Tibial artery (tissue), 4 donors: ENCODE measurements at regions of chr10 and their contacts with region 1.

Region 1: DNA sequence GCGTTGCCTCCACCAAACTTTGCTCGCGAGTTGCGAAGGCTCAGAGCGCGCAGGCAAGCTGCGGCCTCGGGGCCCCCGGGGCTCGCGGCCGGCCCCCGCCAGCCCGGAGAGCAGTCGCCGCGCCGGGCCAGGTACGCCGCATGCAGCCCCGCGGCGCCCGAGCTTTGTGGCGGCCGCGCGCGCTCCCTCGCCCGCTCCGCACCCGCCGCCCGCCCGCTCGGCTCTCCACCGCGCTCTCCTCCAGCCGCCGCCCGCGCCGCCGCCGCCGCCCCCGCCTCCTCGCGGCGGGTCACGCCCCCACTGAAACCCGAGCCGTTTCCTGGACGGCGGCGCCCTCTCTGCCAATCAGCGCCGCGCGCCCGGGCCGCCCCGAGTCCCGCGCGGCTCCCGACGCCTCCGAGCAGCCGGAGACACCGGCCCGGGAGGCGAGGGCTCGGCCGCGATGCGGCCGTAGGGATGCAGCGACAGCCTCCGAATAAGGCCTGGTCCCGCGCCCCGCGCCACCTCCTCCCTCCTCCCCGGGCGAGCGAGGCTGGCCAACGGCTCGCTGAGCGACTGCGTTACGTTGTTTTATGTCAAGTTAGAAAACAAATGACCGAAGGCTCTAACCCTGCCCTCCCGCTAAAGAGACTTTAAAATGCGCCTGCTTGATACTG is at the start of gene FGFR2:
- DNase-seq: peak; percentile 77 to 92
- H3K4me3 ChIP-seq: peak within 1 kb of the TSS; percentile 62 to 65
- H3K27ac ChIP-seq: peak within 1 kb of the TSS; percentile 76 to 89
- H3K4me1 ChIP-seq: peaks cover 0 to 26% (median 12%) of the 10 kb centered on the region in 4 donors
- H3K27me3 ChIP-seq: no peaks in the 10 kb centered on the region
- CTCF ChIP-seq: no peak

Region 2: DNA sequence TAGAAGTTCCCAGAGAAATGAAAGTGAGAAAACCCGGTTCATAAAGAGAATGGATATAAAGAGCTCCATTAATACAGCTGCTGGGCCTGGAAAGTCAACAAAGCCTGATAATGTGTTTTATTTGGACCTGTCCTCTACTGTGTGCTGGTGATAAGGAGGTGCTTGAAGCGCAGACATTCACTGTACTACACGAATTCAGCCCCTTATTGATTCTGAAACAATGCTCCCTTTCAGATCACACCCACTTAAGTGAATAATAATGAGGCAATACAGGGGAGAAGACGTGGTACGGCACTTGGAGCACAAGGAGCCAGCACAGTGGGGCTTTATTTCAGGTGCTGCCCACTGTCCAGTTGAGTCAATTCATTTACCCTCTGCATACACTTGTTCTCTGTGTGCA is 260.9 kb before region 1 on chr10:
- intact Hi-C with region 1: loop called (anchors 5 kb)
- DNase-seq: no peak
- H3K4me3 ChIP-seq: no peak overlapping the region
- H3K27ac ChIP-seq: no peak overlapping the region
- H3K4me1 ChIP-seq: peaks cover 0 to 16% (median 0%) of the 10 kb centered on the region in 4 donors
- H3K27me3 ChIP-seq: no peaks in the 10 kb centered on the region
- CTCF ChIP-seq: no peak

Region 3: DNA sequence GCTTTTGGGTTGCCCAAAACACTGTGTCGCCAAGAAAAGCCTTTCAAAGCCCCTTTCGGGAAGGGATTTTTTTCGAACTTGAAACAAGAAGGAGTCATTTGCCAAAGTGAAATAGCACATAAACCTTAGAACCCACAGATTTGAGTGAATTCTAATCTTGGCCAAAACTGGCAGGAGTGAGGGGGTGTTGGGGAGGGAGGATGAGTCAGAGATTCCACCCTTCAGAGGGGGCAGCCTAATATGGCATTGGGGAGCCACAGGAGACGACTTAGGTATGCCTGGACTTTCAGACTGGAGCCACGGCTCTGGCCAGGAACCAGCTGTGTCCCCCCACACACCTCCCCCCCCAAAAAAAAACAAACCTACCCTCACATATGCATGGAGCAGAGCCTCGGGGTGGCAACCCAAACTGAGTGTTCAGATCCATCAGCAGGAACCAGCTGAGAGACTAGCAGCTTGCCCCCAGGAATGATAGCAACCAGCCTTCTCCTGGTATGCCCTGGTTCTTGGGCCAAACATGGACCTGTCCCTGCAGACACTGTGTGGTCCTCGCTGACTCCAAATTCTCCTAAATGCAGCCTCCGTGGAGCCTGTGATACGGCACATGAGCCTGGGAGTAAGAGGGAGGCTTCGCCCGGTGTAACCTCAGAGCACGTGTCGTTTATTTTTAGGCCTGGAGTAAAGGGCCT is 138.4 kb before region 1 on chr10:
- intact Hi-C with region 1: loop called (anchors 5 kb)
- DNase-seq: peak in 1 of 2 donors; percentile 75
- H3K4me3 ChIP-seq: peak overlapping the region in 1 of 2 donors; percentile 2
- H3K27ac ChIP-seq: peak overlapping the region; percentile 72 to 86
- H3K4me1 ChIP-seq: peaks cover 0 to 65% (median 33%) of the 10 kb centered on the region in 4 donors
- H3K27me3 ChIP-seq: no peaks in the 10 kb centered on the region
- CTCF ChIP-seq: no peak